Caco-2 (cell line): ENCODE measurements at regions of chr2 and their contacts with region 1.

Region 1: GRCh38 chr2:65003037-65003436 is 13.8 kb downstream of the SLC1A4 start:
- DNase-seq: peak in 1 of 2 experiments; percentile 7
- H3K4me3 ChIP-seq: no peak overlapping the region
- H3K4me3 Mint-ChIP-seq: no peak overlapping the region
- H3K27ac Mint-ChIP-seq: no peak overlapping the region
- H3K4me1 ChIP-seq: no peaks in the 10 kb centered on the region
- H3K4me1 Mint-ChIP-seq: no peaks in the 10 kb centered on the region
- H3K27me3 ChIP-seq: no peaks in the 10 kb centered on the region
- H3K27me3 Mint-ChIP-seq: no peaks in the 10 kb centered on the region
- CTCF ChIP-seq: no peak

Region 2: GRCh38 chr2:65017335-65017734 is 14.3 kb after region 1 on chr2:
- CTCF ChIA-PET with region 1: interaction called, 13 read pairs
- POLR2A ChIA-PET with region 1: no interaction called
- intact Hi-C with region 1: no loop called
- DNase-seq: peak in 1 of 2 experiments; percentile 34
- H3K4me3 ChIP-seq: no peak overlapping the region
- H3K4me3 Mint-ChIP-seq: no peak overlapping the region
- H3K27ac Mint-ChIP-seq: no peak overlapping the region
- H3K4me1 ChIP-seq: peaks cover 8% of the 10 kb centered on the region; the same call in 1 of the 2 replicates
- H3K4me1 Mint-ChIP-seq: peaks cover 9% of the 10 kb centered on the region
- H3K27me3 ChIP-seq: no peaks in the 10 kb centered on the region
- H3K27me3 Mint-ChIP-seq: no peaks in the 10 kb centered on the region
- CTCF ChIP-seq: peak in 1 of 2 experiments; percentile 53

Region 3: DNA sequence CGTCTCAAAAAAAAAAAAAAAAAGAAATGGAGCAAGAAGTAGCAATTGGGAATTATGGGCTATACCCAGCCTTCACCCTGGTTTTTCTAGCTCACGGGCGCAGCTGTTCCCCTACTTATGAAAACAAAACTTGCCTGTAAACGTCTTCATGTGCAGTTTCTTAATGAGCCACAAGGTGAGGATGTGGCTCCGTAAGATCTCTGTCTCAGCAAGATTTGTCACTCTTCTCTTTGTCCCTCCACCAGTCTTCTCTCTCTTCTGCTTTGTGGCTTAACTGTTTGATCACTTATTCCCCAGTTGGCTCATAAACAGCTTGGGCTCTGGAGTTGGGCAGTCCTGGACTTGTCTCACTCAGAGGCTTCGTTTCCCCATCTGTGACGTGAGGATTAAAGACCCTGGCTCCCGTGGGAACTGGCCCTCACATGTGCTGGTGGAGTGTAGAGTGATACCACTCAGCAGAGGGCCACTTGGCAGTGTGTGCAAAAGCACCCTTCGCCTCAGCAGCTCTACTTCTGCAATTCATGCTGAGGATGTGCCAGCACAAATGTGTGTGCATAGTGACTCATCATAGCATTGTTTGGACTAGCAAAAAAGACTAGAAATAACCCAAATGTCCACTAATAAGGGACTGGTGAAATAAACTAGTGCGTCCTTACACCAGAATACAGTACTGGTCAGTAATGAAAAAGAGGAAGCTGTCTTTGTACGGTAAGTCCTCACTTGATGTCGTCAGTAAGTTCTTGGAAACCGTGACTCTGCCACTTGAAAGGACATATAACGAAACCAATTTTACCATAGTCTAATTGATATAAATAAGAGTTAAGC is 61.9 kb after region 1 on chr2:
- CTCF ChIA-PET with region 1: no interaction called
- POLR2A ChIA-PET with region 1: no interaction called
- intact Hi-C with region 1: no loop called
- DNase-seq: peak in 1 of 2 experiments; percentile 42
- H3K4me3 ChIP-seq: no peak overlapping the region
- H3K4me3 Mint-ChIP-seq: no peak overlapping the region
- H3K27ac Mint-ChIP-seq: no peak overlapping the region
- H3K4me1 ChIP-seq: peaks cover 5% of the 10 kb centered on the region; the same call in 1 of the 2 replicates
- H3K4me1 Mint-ChIP-seq: no peaks in the 10 kb centered on the region
- H3K27me3 ChIP-seq: no peaks in the 10 kb centered on the region
- H3K27me3 Mint-ChIP-seq: no peaks in the 10 kb centered on the region
- CTCF ChIP-seq: peak; percentile 47 to 82